ENCODE measurements at regions of chr9 and their contacts with region 1.

Region 1: DNA sequence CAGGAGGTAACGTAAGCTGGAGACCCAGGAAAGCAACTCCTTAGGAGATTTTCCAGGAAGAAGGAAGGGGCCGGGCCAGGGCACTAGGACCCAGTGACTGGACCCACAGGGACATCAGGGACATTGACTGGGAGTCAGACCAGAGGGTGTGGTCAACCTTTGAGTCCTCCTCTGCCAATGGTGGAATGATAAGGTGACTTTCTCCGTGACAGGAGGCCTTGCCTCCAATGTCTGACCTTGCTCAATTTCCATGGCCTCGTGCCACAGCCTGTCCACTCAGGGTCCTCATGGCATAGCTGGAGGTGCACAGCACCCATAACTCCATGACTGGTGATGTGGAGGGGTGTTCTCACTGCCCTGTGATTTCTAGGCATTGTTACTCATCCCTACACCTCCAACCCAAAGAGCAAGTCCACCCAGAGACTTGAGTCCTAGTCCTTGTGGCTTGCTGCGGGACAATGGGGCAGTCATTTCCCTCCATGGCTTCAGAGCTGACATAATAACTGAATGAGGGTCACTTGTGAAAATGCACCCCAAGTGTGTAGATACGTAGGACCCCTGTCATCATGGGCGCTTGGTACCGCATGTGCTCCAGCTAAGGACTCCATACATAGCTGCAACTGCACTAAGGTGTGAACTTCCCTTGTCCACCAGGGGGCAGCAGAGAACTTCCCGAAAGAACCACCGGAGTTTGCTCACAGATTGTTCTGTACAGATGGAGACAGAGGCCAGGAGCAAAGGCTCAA is 4.1 kb upstream of the AMBP start:
- DNase-seq: peak; percentile 94
- H3K4me3 ChIP-seq: no peak overlapping the region
- H3K27ac ChIP-seq: no peak overlapping the region
- H3K4me1 ChIP-seq: no peaks in the 10 kb centered on the region
- H3K27me3 ChIP-seq: no peaks in the 10 kb centered on the region
- CTCF ChIP-seq: peak; percentile 51 to 93 (median 85)
- EP300 ChIP-seq: no peak
- POLR2A ChIP-seq: no peak

Region 2: DNA sequence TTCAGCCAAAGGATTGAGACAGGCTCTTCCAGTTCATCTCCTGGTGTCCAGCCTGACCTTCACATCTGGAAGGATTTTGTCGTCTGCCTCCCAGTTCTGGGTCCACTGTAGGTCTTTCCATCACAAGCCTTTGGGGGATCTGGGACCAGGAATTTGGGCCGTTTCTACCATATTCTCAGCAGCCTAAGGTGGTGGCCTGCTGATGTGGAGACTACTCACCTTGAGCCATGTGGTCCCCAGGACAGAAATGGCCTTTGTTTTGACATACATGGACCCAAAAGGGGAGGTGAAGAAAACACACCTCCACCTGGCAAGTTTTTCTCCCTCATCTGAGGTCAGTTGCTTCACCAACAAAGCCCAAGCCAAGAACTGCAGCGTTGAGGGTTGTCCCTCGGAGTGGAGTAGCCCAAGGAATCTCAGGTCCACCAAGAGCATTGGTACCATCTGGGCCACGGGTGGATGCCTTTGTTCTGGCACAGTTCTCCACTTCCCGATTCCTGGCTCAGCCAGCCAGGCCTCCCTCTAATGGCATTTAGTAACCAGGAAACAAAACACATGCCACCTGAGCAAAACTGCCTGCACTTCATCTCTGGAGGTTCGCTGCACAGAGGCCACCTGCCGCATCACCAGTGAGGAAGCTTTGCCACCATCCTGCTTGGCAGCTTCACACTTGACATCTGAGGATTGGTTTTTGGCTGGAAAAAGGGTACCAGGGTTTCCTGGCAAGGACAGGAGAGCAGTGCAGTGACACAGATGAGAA is 28.8 kb before region 1 on chr9:
- intact Hi-C with region 1: no loop called
- DNase-seq: no peak
- H3K4me3 ChIP-seq: no peak overlapping the region
- H3K27ac ChIP-seq: no peak overlapping the region
- H3K4me1 ChIP-seq: no peaks in the 10 kb centered on the region
- H3K27me3 ChIP-seq: no peaks in the 10 kb centered on the region
- CTCF ChIP-seq: no peak
- EP300 ChIP-seq: no peak
- POLR2A ChIP-seq: no peak

Region 3: GRCh38 chr9:114290561-114290986 is 208.4 kb after region 1 on chr9:
- intact Hi-C with region 1: loop called (anchors 1 kb)
- DNase-seq: peak; percentile 40
- H3K4me3 ChIP-seq: no peak overlapping the region
- H3K27ac ChIP-seq: no peak overlapping the region
- H3K4me1 ChIP-seq: peaks cover 0 to 12% (median 3%) of the 10 kb centered on the region in 4 donors
- H3K27me3 ChIP-seq: no peaks in the 10 kb centered on the region
- CTCF ChIP-seq: no peak
- EP300 ChIP-seq: no peak
- POLR2A ChIP-seq: no peak

Region 4: GRCh38 chr9:114304416-114305188 is 222.4 kb after region 1 on chr9:
- intact Hi-C with region 1: loop called (anchors 2 kb)
- DNase-seq: no peak
- H3K4me3 ChIP-seq: no peak overlapping the region
- H3K27ac ChIP-seq: no peak overlapping the region
- H3K4me1 ChIP-seq: peaks cover 0 to 6% (median 3%) of the 10 kb centered on the region in 4 donors
- H3K27me3 ChIP-seq: no peaks in the 10 kb centered on the region
- CTCF ChIP-seq: no peak
- EP300 ChIP-seq: no peak
- POLR2A ChIP-seq: no peak